ENCODE measurements at regions of chr9 and their contacts with region 1.

Region 1: GRCh38 chr9:85258823-85259370 is 482.9 kb downstream of the AGTPBP1 start:
- DNase-seq: peak; percentile 52 to 90 (median 84)
- H3K4me3 ChIP-seq: peak overlapping the region in 33 of 59 donors; percentile 4 to 55 (median 31)
- H3K27ac ChIP-seq: peak overlapping the region in 13 of 59 donors; percentile 0 to 57 (median 34)
- H3K27me3 ChIP-seq: no peaks in the 10 kb centered on the region
- CTCF ChIP-seq: peak; percentile 30 to 93 (median 82)

Region 2: DNA sequence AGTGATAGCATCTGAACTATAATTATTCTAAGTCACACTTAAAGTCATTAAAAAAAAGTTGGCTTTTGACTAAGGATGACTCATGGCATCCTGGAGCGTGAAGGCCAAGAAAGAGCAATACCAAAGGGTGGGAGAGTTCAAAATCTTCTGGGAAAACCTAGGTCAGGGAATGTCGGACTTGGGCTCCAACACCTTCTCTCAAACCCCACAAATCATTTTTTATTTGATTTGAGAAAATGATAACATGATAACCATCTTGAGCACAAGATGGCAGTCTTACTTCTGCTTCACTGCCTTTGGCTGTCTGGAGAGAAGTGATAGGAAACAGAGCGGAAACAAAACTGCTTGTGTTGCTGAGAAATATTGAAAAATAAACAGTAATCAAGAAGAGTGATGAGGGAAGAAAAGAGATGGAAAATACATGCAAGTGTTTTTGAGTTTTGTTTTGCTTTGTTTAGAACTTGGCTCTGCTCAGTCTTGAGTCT is 606.3 kb before region 1 on chr9:
- intact Hi-C with region 1: loop called in 1 of 2 experiments (anchors 5 kb)
- DNase-seq: no peak
- H3K4me3 ChIP-seq: peak overlapping the region in 13 of 59 donors; percentile 2 to 42 (median 21)
- H3K27ac ChIP-seq: no peak overlapping the region
- H3K27me3 ChIP-seq: no peaks in the 10 kb centered on the region
- CTCF ChIP-seq: peak in 55 of 56 donors; percentile 12 to 73 (median 53)

Region 3: GRCh38 chr9:84953797-84954705 is 304.8 kb before region 1 on chr9:
- intact Hi-C with region 1: loop called in 1 of 2 experiments (anchors 10 kb)
- DNase-seq: peak; percentile 75 to 91 (median 86)
- H3K4me3 ChIP-seq: peak overlapping the region in 26 of 59 donors; percentile 1 to 50 (median 25)
- H3K27ac ChIP-seq: peak overlapping the region in 55 of 59 donors; percentile 6 to 88 (median 60)
- H3K27me3 ChIP-seq: no peaks in the 10 kb centered on the region
- CTCF ChIP-seq: peak; percentile 73 to 99 (median 96)

Region 4: GRCh38 chr9:85040821-85041465 is 218.0 kb before region 1 on chr9:
- intact Hi-C with region 1: loop called (anchors 5 to 10 kb)
- DNase-seq: peak; percentile 38 to 94 (median 85)
- H3K4me3 ChIP-seq: peak overlapping the region in 58 of 59 donors; percentile 2 to 64 (median 41)
- H3K27ac ChIP-seq: peak overlapping the region; percentile 86 to 100 (median 98)
- H3K27me3 ChIP-seq: no peaks in the 10 kb centered on the region
- CTCF ChIP-seq: peak in 24 of 56 donors; percentile 6 to 36 (median 18)

Region 5: DNA sequence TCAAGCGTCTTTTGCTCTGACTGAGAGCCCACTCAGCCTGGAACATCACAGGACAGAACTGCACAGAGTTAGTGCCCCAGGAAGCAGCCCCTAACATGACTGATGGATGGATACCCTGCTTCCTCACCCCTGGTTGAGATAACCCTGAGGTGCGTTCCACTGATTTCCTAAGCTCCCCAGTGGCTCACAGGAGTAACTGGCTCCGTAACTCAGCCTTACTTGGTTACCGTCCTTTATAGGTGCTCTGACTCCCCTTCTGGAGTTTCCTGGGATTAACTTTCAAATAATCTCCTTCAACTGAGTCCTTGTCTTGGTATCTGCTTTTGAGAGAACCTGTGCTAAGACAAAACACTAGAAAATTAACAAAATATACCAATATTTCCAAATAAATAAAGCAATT is 33.4 kb after region 1 on chr9:
- intact Hi-C with region 1: no loop called
- DNase-seq: no peak
- H3K4me3 ChIP-seq: no peak overlapping the region
- H3K27ac ChIP-seq: no peak overlapping the region
- H3K27me3 ChIP-seq: no peaks in the 10 kb centered on the region
- CTCF ChIP-seq: no peak

Region 6: GRCh38 chr9:85522459-85523092 is 263.7 kb after region 1 on chr9:
- intact Hi-C with region 1: loop called in 1 of 2 experiments (anchors 10 kb)
- DNase-seq: peak in 9 of 10 donors; percentile 34 to 80 (median 61)
- H3K4me3 ChIP-seq: peak overlapping the region in 58 of 59 donors; percentile 17 to 68 (median 52)
- H3K27ac ChIP-seq: peak overlapping the region; percentile 59 to 100 (median 98)
- H3K27me3 ChIP-seq: no peaks in the 10 kb centered on the region
- CTCF ChIP-seq: no peak